ENCODE measurements at regions of chr12 and their contacts with region 1.

Region 1: GRCh38 chr12:22083167-22083566 is 37.1 kb downstream of the CMAS start:
- DNase-seq: no peak
- ATAC-seq: peak; percentile 37
- H3K4me3 Mint-ChIP-seq: no peak overlapping the region
- H3K27ac Mint-ChIP-seq: no peak overlapping the region
- H3K4me1 Mint-ChIP-seq: no peaks in the 10 kb centered on the region
- H3K27me3 Mint-ChIP-seq: no peaks in the 10 kb centered on the region
- CTCF ChIP-seq: no peak

Region 2: GRCh38 chr12:22459838-22460490 is 376.8 kb after region 1 on chr12:
- CTCF ChIA-PET with region 1: interaction called, 6 read pairs
- POLR2A ChIA-PET with region 1: no interaction called
- intact Hi-C with region 1: loop called (anchors 1 kb)
- DNase-seq: no peak
- ATAC-seq: peak; percentile 49
- H3K4me3 Mint-ChIP-seq: no peak overlapping the region
- H3K27ac Mint-ChIP-seq: no peak overlapping the region
- H3K4me1 Mint-ChIP-seq: peaks cover 7% of the 10 kb centered on the region
- H3K27me3 Mint-ChIP-seq: no peaks in the 10 kb centered on the region
- CTCF ChIP-seq: peak; percentile 50

Region 3: DNA sequence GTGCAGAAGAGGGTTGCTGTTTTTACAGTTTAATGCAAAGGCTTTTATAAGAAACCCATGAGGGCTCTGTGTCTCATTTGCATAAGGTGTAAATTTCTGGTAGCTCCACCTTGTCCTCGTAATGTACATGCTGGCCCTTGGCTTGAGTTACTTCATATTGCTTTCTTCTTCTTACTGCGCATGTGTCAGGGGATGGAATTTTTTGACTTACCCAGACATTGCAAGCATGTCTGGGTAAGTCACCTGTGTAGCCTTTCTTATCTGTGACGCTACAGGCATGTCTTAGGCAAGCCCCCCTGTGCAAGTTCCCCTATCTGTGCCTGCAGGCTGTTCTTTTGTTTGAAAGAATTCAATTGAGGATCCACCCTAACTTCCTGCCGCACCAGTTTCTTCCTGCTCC is 816.0 kb after region 1 on chr12:
- CTCF ChIA-PET with region 1: no interaction called
- POLR2A ChIA-PET with region 1: no interaction called
- intact Hi-C with region 1: no loop called
- DNase-seq: no peak
- ATAC-seq: no peak
- H3K4me3 Mint-ChIP-seq: no peak overlapping the region
- H3K27ac Mint-ChIP-seq: no peak overlapping the region
- H3K4me1 Mint-ChIP-seq: no peaks in the 10 kb centered on the region
- H3K27me3 Mint-ChIP-seq: peaks cover 4% of the 10 kb centered on the region
- CTCF ChIP-seq: no peak

Measured in activated B cell treated with CpG ODN at 0.5 μM for 24 hours (primary cell).